Thyroid gland (tissue), 4 donors: ENCODE measurements at regions of chr2 and their contacts with region 1.

Region 1: GRCh38 chr2:16226921-16227664 is 286.7 kb downstream of the MYCN start:
- DNase-seq: peak; percentile 73 to 87
- H3K4me3 ChIP-seq: no peak overlapping the region
- H3K27ac ChIP-seq: no peak overlapping the region
- H3K4me1 ChIP-seq: peaks cover 0 to 6% of the 10 kb centered on the region in 2 donors
- H3K27me3 ChIP-seq: no peaks in the 10 kb centered on the region
- CTCF ChIP-seq: no peak
- POLR2A ChIP-seq: no peak

Region 2: GRCh38 chr2:16318474-16319195 is 91.5 kb after region 1 on chr2:
- intact Hi-C with region 1: no loop called
- DNase-seq: no peak
- H3K4me3 ChIP-seq: no peak overlapping the region
- H3K27ac ChIP-seq: no peak overlapping the region
- H3K4me1 ChIP-seq: no peaks in the 10 kb centered on the region
- H3K27me3 ChIP-seq: no peaks in the 10 kb centered on the region
- CTCF ChIP-seq: no peak
- POLR2A ChIP-seq: no peak

Region 3: GRCh38 chr2:16496426-16497388 is 269.6 kb after region 1 on chr2:
- intact Hi-C with region 1: loop called (anchors 10 kb)
- DNase-seq: no peak
- H3K4me3 ChIP-seq: no peak overlapping the region
- H3K27ac ChIP-seq: no peak overlapping the region
- H3K4me1 ChIP-seq: no peaks in the 10 kb centered on the region
- H3K27me3 ChIP-seq: no peaks in the 10 kb centered on the region
- CTCF ChIP-seq: no peak
- POLR2A ChIP-seq: no peak